ENCODE measurements at regions of chr1 and their contacts with region 1.

Region 1: GRCh38 chr1:212284744-212285684 is at the start of gene PPP2R5A:
- DNase-seq: peak; percentile 99
- H3K4me3 Mint-ChIP-seq: peak within 1 kb of the TSS; percentile 96
- H3K27ac Mint-ChIP-seq: peak within 1 kb of the TSS; percentile 91
- H3K4me1 Mint-ChIP-seq: peaks cover 32% of the 10 kb centered on the region
- H3K27me3 Mint-ChIP-seq: no peaks in the 10 kb centered on the region
- total RNA-seq, gene PPP2R5A: 30.6 to 31.4 TPM

Region 2: DNA sequence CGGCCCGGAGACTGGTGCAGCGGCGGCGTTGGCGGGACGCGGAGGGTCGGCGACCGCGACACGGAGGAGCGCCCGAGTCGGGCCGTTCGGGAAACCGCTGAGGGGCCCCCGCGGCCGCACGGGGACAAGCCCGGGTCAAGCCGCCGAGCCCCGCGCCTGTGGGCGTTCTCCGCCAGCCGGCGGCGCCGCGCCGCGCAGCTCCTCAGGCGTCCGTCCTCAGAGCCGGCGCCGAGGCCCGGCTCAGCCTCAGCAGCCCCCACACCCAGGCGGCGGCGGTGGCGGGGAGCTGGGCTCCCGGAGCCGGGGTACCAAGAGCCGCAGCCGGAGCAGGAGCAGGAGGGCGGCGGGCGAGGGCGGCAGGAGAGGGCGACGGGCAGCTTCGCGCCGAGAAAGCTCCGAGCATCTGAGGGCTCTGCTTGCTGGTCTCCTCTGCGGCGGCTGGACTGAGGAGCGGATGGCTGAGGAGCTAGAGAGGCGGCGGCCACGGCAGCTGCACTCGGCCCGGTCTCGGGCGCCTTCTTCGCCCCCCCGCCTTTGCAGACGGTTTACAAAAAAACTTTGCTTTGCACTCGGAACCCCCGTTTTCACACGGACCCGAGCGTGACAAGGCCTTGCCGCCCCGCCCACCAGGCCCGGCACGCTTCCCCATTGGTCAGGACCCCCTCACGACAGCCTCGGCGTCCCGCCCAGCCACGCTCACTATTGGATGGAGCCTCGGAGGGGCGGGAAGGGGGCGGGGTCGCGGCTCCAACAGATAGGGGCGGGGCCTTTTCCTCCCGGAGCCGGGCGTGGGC is 706.2 kb before region 1 on chr1 and contains the start of gene SLC30A1:
- CTCF ChIA-PET with region 1: no interaction called
- intact Hi-C with region 1: loop called (anchors 1 kb)
- DNase-seq: peak; percentile 99
- H3K4me3 Mint-ChIP-seq: peak within 1 kb of the TSS; percentile 90
- H3K27ac Mint-ChIP-seq: peak within 1 kb of the TSS; percentile 75
- H3K4me1 Mint-ChIP-seq: peaks cover 31% of the 10 kb centered on the region
- H3K27me3 Mint-ChIP-seq: no peaks in the 10 kb centered on the region
- total RNA-seq, gene SLC30A1: 4.4 to 4.7 TPM

Region 3: GRCh38 chr1:212162635-212163034 is 122.4 kb before region 1 on chr1:
- CTCF ChIA-PET with region 1: no interaction called
- intact Hi-C with region 1: loop called (anchors 1 kb)
- DNase-seq: peak; percentile 60
- H3K4me3 Mint-ChIP-seq: no peak overlapping the region
- H3K27ac Mint-ChIP-seq: no peak overlapping the region
- H3K4me1 Mint-ChIP-seq: peaks cover 32% of the 10 kb centered on the region
- H3K27me3 Mint-ChIP-seq: no peaks in the 10 kb centered on the region

Region 4: GRCh38 chr1:212256369-212256768 is 28.6 kb before region 1 on chr1:
- CTCF ChIA-PET with region 1: no interaction called
- intact Hi-C with region 1: loop called (anchors 1 kb)
- DNase-seq: peak; percentile 35
- H3K4me3 Mint-ChIP-seq: no peak overlapping the region
- H3K27ac Mint-ChIP-seq: peak overlapping the region; percentile 34
- H3K4me1 Mint-ChIP-seq: peaks cover 59% of the 10 kb centered on the region
- H3K27me3 Mint-ChIP-seq: no peaks in the 10 kb centered on the region

Region 5: GRCh38 chr1:212432706-212433576 is 147.9 kb after region 1 on chr1 and contains the start of gene NENF:
- CTCF ChIA-PET with region 1: no interaction called
- intact Hi-C with region 1: loop called (anchors 1 kb)
- DNase-seq: peak; percentile 74
- H3K4me3 Mint-ChIP-seq: peak within 1 kb of the TSS; percentile 76
- H3K27ac Mint-ChIP-seq: no peak within 1 kb of the TSS
- H3K4me1 Mint-ChIP-seq: peaks cover 37% of the 10 kb centered on the region
- H3K27me3 Mint-ChIP-seq: no peaks in the 10 kb centered on the region
- total RNA-seq, gene NENF: 27.0 to 30.9 TPM

Region 6: GRCh38 chr1:212488397-212489283 is 203.6 kb after region 1 on chr1:
- CTCF ChIA-PET with region 1: no interaction called
- intact Hi-C with region 1: no loop called
- DNase-seq: peak; percentile 52
- H3K4me3 Mint-ChIP-seq: no peak overlapping the region
- H3K27ac Mint-ChIP-seq: no peak overlapping the region
- H3K4me1 Mint-ChIP-seq: no peaks in the 10 kb centered on the region
- H3K27me3 Mint-ChIP-seq: no peaks in the 10 kb centered on the region

Region 7: GRCh38 chr1:212857992-212858460 is 573.0 kb after region 1 on chr1 and contains the start of gene FLVCR1:
- CTCF ChIA-PET with region 1: no interaction called
- intact Hi-C with region 1: loop called (anchors 1 kb)
- DNase-seq: peak; percentile 98
- H3K4me3 Mint-ChIP-seq: peak within 1 kb of the TSS; percentile 97
- H3K27ac Mint-ChIP-seq: peak within 1 kb of the TSS; percentile 88
- H3K4me1 Mint-ChIP-seq: peaks cover 11% of the 10 kb centered on the region
- H3K27me3 Mint-ChIP-seq: no peaks in the 10 kb centered on the region
- total RNA-seq, gene FLVCR1: 6.0 to 7.3 TPM

Measured in activated naive CD4-positive, alpha-beta T cell treated with anti-CD3 and anti-CD28 coated beads for 36 hours (primary cell).